Sigmoid colon (tissue), 7 donors: ENCODE measurements at regions of chr1 and their contacts with region 1.

Region 1: GRCh38 chr1:158035976-158036583 is 42.6 kb downstream of the KIRREL1 start:
- DNase-seq: no peak
- H3K4me3 ChIP-seq: no peak overlapping the region
- H3K27ac ChIP-seq: peak overlapping the region in 2 of 4 donors; percentile 30 to 41
- H3K4me1 ChIP-seq: peaks cover 0 to 46% (median 38%) of the 10 kb centered on the region in 4 donors
- H3K27me3 ChIP-seq: no peaks in the 10 kb centered on the region
- CTCF ChIP-seq: peak; percentile 69 to 74 (median 72)
- EP300 ChIP-seq: no peak
- POLR2A ChIP-seq: no peak

Region 2: DNA sequence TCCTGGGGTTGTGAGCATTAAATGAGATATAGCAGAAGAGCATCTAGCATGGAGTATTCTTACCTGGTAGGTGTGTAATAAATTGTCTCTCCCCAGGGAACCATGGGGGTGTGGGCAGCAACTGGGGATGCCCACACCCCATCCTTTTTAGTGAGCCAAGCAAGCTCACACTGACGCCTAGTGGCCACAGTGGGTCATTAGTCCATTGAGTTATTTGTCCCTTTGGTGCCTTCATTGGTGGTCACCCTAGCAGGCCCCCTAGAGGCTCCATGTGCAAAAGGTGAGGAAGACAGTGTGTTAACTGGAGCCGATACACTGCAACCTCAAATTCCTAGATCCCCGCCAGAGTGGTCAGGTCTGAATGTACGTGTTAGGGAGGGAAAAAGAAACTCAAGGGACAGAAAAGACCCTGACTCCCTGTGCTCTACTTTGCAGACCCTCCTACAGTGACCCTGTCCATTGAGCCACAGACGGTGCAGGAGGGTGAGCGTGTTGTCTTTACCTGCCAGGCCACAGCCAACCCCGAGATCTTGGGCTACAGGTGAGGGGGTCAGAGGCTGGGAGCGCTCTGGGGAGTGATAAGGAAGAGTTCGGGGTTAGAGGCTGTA is 51.3 kb after region 1 on chr1:
- intact Hi-C with region 1: loop called (anchors 5 kb)
- DNase-seq: peak; percentile 78
- H3K4me3 ChIP-seq: no peak overlapping the region
- H3K27ac ChIP-seq: no peak overlapping the region
- H3K4me1 ChIP-seq: no peaks in the 10 kb centered on the region
- H3K27me3 ChIP-seq: no peaks in the 10 kb centered on the region
- CTCF ChIP-seq: peak; percentile 65 to 89 (median 80)
- EP300 ChIP-seq: no peak
- POLR2A ChIP-seq: no peak